ENCODE measurements at regions of chr9 and their contacts with region 1.

Region 1: DNA sequence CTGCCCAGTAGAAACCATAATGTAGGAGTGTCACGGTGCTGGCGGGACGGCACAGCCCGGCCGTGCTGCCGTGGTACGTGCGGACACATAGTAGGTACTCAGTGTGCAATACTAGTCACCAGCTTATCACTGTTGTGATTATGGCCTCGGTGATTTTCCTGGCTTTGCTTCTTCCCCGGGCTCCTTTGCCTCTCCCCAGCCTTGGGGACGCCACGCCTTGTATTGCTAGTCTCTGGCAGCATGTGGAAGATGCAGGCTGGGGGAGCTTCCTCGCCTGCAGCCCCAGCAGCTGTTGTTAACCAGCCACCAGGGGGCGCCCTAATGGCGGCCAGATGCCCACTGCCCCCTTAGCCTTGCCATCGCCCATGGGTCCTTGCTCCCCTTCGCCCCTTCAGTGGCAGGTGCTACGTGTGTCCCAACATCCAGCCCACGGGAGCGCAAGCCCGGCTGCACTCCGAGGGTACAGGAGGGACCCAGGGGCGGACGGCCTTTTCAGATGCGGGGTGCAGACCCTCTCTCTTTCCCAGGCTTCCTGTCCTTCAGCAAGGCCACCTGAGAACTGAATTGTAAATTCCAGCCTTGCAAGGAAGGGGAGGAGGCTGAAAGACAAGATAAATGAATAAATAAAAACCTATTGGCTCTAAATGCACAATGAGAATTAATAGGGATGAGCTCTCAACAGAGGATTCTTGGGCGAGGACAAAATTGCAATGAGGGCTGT is 8.0 kb downstream of the NTNG2 start:
- DNase-seq: peak; percentile 51
- ATAC-seq: peak; percentile 70
- H3K4me3 ChIP-seq: no peak overlapping the region
- H3K27ac ChIP-seq: no peak overlapping the region
- H3K4me1 ChIP-seq: no peaks in the 10 kb centered on the region; the same call in 1 of the 2 replicates
- H3K27me3 ChIP-seq: peaks cover 18% of the 10 kb centered on the region
- CTCF ChIP-seq: peak; percentile 73
- POLR2A ChIP-seq: no peak
- RAD21 ChIP-seq: peak; percentile 71

Region 2: GRCh38 chr9:132026932-132027585 is 142.8 kb before region 1 on chr9:
- CTCF ChIA-PET with region 1: no interaction called
- POLR2A ChIA-PET with region 1: no interaction called
- dilution Hi-C with region 1: no loop called
- in situ Hi-C with region 1: no loop called
- intact Hi-C with region 1: loop called (anchors 10 kb)
- DNase-seq: peak; percentile 74
- ATAC-seq: peak; percentile 91
- H3K4me3 ChIP-seq: no peak overlapping the region
- H3K27ac ChIP-seq: peak overlapping the region; percentile 55
- H3K4me1 ChIP-seq: peaks cover 20% of the 10 kb centered on the region
- H3K27me3 ChIP-seq: no peaks in the 10 kb centered on the region
- CTCF ChIP-seq: no peak
- POLR2A ChIP-seq: no peak
- RAD21 ChIP-seq: no peak

Region 3: DNA sequence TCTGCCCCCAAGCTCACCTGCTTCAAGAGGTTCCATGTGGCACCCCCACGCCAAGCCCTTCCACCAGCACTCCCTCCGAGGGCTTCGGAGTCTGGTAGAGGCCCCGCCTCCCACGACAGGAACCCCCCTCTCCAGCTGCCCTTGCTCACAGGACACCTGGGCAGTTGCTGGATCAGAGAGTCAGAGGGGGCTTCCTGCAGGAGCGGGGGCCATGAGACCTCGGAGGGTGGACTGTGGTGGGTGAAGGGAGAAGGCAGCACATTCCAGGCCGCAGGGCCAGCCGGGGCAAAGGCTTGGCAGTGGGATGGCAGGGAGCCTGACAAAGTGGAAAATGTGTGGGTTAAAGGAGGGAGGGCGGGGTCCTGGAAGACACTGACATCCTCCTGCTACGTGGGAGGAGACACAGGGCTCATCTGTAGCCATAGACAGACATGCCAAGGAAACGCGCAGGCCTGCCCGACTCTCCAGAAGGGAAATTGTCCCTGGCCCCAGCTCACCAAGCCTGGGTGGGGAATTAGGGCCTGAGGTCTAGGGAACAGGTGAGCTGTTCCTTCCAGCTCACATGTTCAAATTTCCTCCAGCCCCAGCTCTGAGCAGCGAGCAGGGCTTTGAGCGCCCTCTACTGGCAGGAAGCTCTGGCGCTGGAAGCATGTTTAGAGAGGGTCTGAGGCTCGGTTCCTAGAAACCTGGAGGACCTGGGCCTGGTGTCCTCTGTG is 66.3 kb after region 1 on chr9:
- CTCF ChIA-PET with region 1: interaction called, 11 read pairs
- POLR2A ChIA-PET with region 1: no interaction called
- dilution Hi-C with region 1: no loop called
- in situ Hi-C with region 1: no loop called
- intact Hi-C with region 1: loop called (anchors 1 kb)
- DNase-seq: peak; percentile 56
- ATAC-seq: peak; percentile 33
- H3K4me3 ChIP-seq: no peak overlapping the region
- H3K27ac ChIP-seq: no peak overlapping the region
- H3K4me1 ChIP-seq: peaks cover 3% of the 10 kb centered on the region; the same call in 1 of the 2 replicates
- H3K27me3 ChIP-seq: peaks cover 56% of the 10 kb centered on the region
- CTCF ChIP-seq: peak; percentile 94
- POLR2A ChIP-seq: peak; percentile 49; the same call in 1 of the 2 replicates
- RAD21 ChIP-seq: peak; percentile 97